Transverse colon (tissue), 4 donors: ENCODE measurements at regions of chr15 and their contacts with region 1.

Region 1: DNA sequence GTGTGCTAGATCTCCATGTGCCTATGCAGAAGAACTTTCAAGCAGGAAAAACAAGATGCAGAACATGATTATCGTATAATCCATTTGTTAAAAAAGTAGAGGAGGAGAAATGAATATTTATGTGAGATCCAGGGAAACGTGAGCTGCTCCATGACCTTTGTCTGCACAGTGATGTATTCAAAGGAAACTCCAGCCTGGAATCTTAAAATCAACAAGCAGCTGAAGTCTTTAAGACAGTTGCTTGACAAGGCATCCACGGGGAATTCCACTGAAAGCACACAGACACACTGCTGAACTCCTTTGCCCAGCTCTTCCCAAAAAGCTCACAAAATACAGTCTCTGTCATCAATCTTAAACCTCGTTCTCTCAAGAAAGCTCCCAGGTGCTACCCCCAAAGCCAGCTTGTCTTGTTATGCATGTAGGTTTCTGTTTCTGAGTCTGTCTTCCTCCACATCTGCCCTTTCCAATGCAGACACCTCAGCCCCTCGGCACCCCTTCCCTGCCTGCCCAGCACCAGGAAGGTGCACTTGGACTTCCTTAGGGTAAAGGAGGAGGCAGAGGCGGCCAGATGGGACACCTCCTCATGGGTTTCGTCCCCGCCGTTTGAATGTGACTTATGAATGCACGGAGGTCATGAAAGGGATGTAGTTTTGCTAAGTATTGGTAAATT is 28.7 kb downstream of the LRRK1 start:
- DNase-seq: no peak
- H3K4me3 ChIP-seq: no peak overlapping the region
- H3K27ac ChIP-seq: no peak overlapping the region
- H3K4me1 ChIP-seq: peaks cover 0 to 9% (median 5%) of the 10 kb centered on the region in 4 donors
- H3K27me3 ChIP-seq: no peaks in the 10 kb centered on the region
- CTCF ChIP-seq: no peak
- EP300 ChIP-seq: no peak
- POLR2A ChIP-seq: no peak

Region 2: DNA sequence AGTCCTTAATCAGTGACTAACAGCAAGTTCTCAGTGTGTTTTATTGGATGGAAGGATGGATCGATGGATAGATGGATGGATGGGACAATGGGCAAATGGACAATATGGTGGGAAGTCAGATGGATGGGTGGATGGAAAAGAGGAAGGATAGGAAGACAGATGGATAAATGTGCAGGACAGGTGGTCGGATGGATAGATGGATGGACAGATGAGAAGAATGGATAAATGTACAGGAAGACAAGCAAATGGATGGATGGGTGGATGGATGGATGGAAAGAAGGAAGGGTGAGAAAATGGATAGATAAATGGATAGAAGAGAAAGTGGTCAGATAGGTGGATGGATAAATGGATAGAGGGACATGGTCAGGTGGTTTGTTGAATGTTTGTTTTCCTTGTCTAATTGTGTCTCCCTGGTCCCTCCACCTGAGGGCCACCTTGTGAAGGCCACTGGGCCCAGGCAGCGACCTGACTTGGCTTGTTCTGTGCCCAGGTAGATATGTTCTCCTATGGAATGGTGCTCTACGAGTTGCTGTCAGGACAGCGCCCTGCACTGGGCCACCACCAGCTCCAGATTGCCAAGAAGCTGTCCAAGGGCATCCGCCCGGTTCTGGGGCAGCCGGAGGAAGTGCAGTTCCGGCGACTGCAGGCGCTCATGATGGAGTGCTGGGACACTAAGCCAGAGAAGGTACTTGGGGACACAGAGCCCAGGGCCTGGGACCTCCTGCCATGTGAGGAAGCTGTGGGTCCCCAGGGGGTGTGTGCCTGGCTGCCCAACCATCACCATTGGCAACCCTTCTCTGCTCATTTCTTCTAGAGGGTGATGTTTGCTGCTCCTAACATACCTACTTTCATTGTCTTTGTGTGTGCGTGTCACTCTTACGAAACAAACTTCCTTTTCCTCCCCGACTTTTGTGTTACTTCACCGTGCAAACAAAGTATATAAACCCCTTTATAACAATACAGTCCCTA is 108.8 kb after region 1 on chr15:
- in situ Hi-C with region 1: no loop called
- intact Hi-C with region 1: no loop called
- DNase-seq: no peak
- H3K4me3 ChIP-seq: no peak overlapping the region
- H3K27ac ChIP-seq: no peak overlapping the region
- H3K4me1 ChIP-seq: peaks cover 0 to 6% (median 0%) of the 10 kb centered on the region in 4 donors
- H3K27me3 ChIP-seq: no peaks in the 10 kb centered on the region
- CTCF ChIP-seq: no peak
- EP300 ChIP-seq: no peak
- POLR2A ChIP-seq: no peak

Region 3: DNA sequence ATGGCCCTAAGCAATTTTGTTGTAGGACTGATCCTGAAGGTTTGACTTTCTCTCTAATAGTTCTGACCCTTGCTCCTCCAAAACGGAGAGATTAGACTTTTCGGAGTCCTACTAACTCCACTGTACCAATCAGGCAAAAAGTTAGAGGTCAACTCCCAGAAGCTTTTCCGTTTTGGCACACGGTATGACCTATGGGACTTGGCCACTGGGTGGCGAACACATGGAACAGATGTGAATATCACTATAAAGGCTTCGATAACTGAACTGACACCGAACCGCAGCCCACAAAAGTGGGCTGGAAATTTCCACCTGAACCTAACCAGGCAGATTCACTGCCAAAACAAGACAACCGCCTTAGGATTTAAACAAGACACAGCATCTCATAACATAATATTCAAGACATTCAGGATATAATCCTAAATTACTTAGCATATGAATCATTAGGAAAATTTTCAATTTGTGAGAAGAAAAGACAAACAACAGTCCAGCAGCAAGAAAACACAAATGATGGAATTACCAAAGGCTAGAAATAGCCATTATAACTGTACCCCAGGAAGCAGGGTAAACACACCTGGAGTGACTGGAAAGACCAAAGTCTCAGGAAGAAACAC is 716.5 kb after region 1 on chr15:
- in situ Hi-C with region 1: no loop called
- intact Hi-C with region 1: loop called (anchors 5 kb)
- DNase-seq: no peak
- H3K4me3 ChIP-seq: no peak overlapping the region
- H3K27ac ChIP-seq: no peak overlapping the region
- H3K4me1 ChIP-seq: no peaks in the 10 kb centered on the region
- H3K27me3 ChIP-seq: no peaks in the 10 kb centered on the region
- CTCF ChIP-seq: no peak
- EP300 ChIP-seq: no peak
- POLR2A ChIP-seq: no peak